ENCODE measurements at regions of chr15 and their contacts with region 1.

Region 1: GRCh38 chr15:27608248-27608647 is 490.9 kb downstream of the OCA2 start:
- DNase-seq: no peak
- ATAC-seq: no peak
- H3K4me3 ChIP-seq: no peak overlapping the region
- H3K27ac ChIP-seq: no peak overlapping the region
- H3K4me1 ChIP-seq: no peaks in the 10 kb centered on the region
- H3K27me3 ChIP-seq: no peaks in the 10 kb centered on the region
- CTCF ChIP-seq: no peak
- POLR2A ChIP-seq: no peak
- RAD21 ChIP-seq: no peak

Region 2: DNA sequence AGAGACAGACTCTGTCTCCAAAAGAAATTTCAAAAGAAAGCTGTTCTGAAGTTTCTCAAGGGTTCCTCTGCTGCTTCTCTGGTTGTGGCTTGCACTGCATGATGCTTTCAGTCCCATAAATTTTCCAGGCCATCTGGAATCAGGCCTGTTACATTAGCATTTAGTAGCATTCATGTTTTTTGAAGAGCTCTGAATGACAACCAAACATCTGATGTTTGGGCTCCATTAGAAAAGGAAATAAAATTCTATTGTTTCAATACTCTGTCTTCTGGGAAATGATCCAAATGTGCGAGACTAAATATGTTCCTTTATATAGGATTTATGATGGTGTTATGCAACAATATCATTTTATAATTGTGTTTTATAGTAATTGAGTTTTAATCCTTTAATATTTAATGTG is 181.4 kb before region 1 on chr15:
- CTCF ChIA-PET with region 1: no interaction called
- POLR2A ChIA-PET with region 1: no interaction called
- RAD21 ChIA-PET with region 1: no interaction called
- intact Hi-C with region 1: no loop called
- DNase-seq: no peak
- ATAC-seq: no peak
- H3K4me3 ChIP-seq: no peak overlapping the region
- H3K27ac ChIP-seq: no peak overlapping the region
- H3K4me1 ChIP-seq: no peaks in the 10 kb centered on the region
- H3K27me3 ChIP-seq: no peaks in the 10 kb centered on the region
- CTCF ChIP-seq: no peak
- POLR2A ChIP-seq: no peak
- RAD21 ChIP-seq: no peak

Region 3: GRCh38 chr15:27648359-27648758 is 40.1 kb after region 1 on chr15:
- CTCF ChIA-PET with region 1: no interaction called
- POLR2A ChIA-PET with region 1: no interaction called
- RAD21 ChIA-PET with region 1: no interaction called
- intact Hi-C with region 1: loop called (anchors 5 kb)
- DNase-seq: no peak
- ATAC-seq: no peak
- H3K4me3 ChIP-seq: no peak overlapping the region
- H3K27ac ChIP-seq: no peak overlapping the region
- H3K4me1 ChIP-seq: no peaks in the 10 kb centered on the region
- H3K27me3 ChIP-seq: no peaks in the 10 kb centered on the region
- CTCF ChIP-seq: no peak
- POLR2A ChIP-seq: no peak
- RAD21 ChIP-seq: no peak

Measured in HCT116 (cell line).